ENCODE measurements at regions of chr10 and their contacts with region 1.

Region 1: DNA sequence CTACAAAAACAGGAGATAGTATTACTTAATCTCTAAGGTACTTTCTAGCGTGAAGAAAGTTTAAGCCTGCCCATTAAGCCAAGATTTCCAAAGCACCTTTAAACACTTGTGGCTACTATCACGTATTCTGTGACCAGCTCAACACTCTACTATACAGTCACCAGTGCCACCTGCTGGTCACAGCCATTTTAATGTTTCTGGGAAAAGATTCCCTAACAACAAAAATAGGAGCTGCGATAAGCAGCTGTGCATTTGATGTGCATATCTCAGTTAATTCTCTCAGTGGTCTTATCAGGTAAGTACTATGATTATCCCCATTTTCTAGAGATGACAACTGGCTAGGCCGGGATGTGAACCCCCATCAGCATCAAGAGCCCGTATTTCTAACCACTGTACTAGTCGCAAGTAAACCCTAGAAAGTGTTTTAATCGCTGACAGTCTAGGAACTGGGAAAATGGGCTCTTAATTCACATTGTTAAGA is 860 bp downstream of the SEC31B start:
- DNase-seq: peak; percentile 82
- ATAC-seq: peak; percentile 76
- H3K4me3 Mint-ChIP-seq: no peak overlapping the region
- H3K27ac Mint-ChIP-seq: peak overlapping the region; percentile 47
- H3K4me1 Mint-ChIP-seq: peaks cover 13% of the 10 kb centered on the region
- H3K27me3 Mint-ChIP-seq: no peaks in the 10 kb centered on the region

Region 2: DNA sequence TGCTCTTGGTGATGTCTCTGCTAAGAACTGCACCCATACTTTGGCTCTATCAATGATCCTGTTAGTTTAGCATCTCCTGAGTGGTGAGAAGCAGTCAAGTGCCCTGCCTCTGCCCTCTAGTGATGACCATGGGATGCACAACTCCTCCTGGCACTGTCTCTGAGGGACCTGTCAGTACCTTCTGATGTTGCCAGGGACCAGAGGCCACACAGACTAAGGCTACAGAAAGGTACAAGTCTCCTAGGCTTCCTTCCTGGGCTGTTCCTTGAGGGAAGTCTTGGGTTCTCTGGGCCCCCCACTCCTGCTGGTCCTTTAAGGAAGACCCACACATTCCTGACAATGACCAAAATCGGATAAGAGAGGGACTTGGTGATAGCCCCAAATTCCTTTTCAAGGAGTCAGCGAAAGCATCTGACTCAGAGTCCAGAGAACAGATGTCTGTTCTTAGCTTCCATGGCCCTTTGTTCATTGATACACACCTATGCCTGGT is 970.7 kb before region 1 on chr10:
- CTCF ChIA-PET with region 1: no interaction called
- POLR2A ChIA-PET with region 1: no interaction called
- intact Hi-C with region 1: no loop called
- DNase-seq: peak; percentile 48
- ATAC-seq: peak; percentile 65
- H3K4me3 Mint-ChIP-seq: no peak overlapping the region
- H3K27ac Mint-ChIP-seq: no peak overlapping the region
- H3K4me1 Mint-ChIP-seq: no peaks in the 10 kb centered on the region
- H3K27me3 Mint-ChIP-seq: peaks cover 36% of the 10 kb centered on the region

Region 3: DNA sequence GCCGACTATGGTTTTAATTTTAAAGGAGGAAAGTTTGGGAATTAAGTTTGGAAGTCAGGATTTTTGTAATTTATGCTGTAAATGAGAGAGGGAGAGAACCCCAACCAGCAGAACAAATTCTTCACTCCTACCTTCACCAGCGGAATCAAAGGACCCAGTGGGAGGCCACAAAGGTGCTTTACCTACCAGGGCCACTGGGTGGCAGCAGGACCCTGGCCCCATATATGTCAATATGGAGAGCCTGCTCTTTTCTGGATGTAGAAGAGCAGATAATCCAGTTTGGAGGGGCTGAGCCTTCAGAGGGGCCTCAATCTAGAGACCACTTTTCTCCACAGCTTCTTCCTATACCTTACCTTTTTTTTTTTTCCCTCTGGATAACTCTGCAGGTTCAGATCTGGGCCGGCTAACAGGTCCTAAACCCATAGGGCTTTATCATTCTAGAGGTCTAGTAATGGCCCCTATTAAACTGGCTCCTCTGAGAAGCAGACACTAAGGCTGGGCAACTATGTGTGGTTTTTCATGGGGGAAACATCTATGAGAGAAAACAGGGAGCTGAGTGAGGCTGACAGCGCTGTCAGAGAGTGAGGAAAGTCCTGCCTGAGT is 180.3 kb before region 1 on chr10:
- CTCF ChIA-PET with region 1: interaction called, 12 read pairs
- POLR2A ChIA-PET with region 1: no interaction called
- intact Hi-C with region 1: loop called in 1 of 2 experiments (anchors 1 kb)
- DNase-seq: peak; percentile 90
- ATAC-seq: peak; percentile 85
- H3K4me3 Mint-ChIP-seq: no peak overlapping the region
- H3K27ac Mint-ChIP-seq: no peak overlapping the region
- H3K4me1 Mint-ChIP-seq: no peaks in the 10 kb centered on the region
- H3K27me3 Mint-ChIP-seq: no peaks in the 10 kb centered on the region

Region 4: GRCh38 chr10:100346765-100347567 is 171.8 kb before region 1 on chr10 and contains the start of gene SCD:
- CTCF ChIA-PET with region 1: interaction called, 13 read pairs
- POLR2A ChIA-PET with region 1: no interaction called
- intact Hi-C with region 1: no loop called
- DNase-seq: peak; percentile 94
- ATAC-seq: peak; percentile 92
- H3K4me3 Mint-ChIP-seq: peak within 1 kb of the TSS; percentile 88
- H3K27ac Mint-ChIP-seq: peak within 1 kb of the TSS; percentile 91
- H3K4me1 Mint-ChIP-seq: peaks cover 44% of the 10 kb centered on the region
- H3K27me3 Mint-ChIP-seq: no peaks in the 10 kb centered on the region
- total RNA-seq, gene SCD: 203 to 206 TPM

Region 5: GRCh38 chr10:100433253-100434240 is 85.3 kb before region 1 on chr10:
- CTCF ChIA-PET with region 1: interaction called, 117 read pairs
- POLR2A ChIA-PET with region 1: no interaction called
- intact Hi-C with region 1: loop called (anchors 1 kb)
- DNase-seq: peak; percentile 98
- ATAC-seq: peak; percentile 98
- H3K4me3 Mint-ChIP-seq: peak overlapping the region; percentile 7
- H3K27ac Mint-ChIP-seq: no peak overlapping the region
- H3K4me1 Mint-ChIP-seq: peaks cover 5% of the 10 kb centered on the region
- H3K27me3 Mint-ChIP-seq: peaks cover 2% of the 10 kb centered on the region

Region 6: GRCh38 chr10:100438674-100439315 is 80.0 kb before region 1 on chr10:
- CTCF ChIA-PET with region 1: interaction called, 117 read pairs
- POLR2A ChIA-PET with region 1: no interaction called
- intact Hi-C with region 1: loop called (anchors 1 kb)
- DNase-seq: no peak
- ATAC-seq: no peak
- H3K4me3 Mint-ChIP-seq: no peak overlapping the region
- H3K27ac Mint-ChIP-seq: no peak overlapping the region
- H3K4me1 Mint-ChIP-seq: peaks cover 3% of the 10 kb centered on the region
- H3K27me3 Mint-ChIP-seq: peaks cover 1% of the 10 kb centered on the region

Region 7: DNA sequence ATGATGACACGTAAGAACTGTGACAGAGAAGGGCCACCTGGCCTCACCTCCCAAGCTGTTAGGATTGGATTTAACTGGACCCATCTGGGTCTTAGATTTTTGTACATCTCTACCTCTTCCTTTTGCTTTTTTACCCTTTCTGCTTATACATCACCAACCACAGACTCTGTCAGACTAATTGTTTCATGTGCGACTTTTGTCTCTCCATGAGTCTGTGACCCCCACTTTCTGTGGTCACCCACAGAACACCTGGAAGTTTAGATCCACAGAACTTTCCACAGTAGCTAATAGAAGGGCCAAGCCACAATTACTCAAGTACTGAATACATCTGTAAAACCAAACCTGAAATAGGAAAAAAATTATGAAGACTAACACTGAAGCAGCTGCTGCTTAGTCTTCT is 22.2 kb before region 1 on chr10:
- CTCF ChIA-PET with region 1: interaction called, 15 read pairs
- POLR2A ChIA-PET with region 1: no interaction called
- intact Hi-C with region 1: no loop called
- DNase-seq: peak; percentile 20
- ATAC-seq: peak; percentile 53
- H3K4me3 Mint-ChIP-seq: no peak overlapping the region
- H3K27ac Mint-ChIP-seq: peak overlapping the region; percentile 62
- H3K4me1 Mint-ChIP-seq: peaks cover 5% of the 10 kb centered on the region
- H3K27me3 Mint-ChIP-seq: no peaks in the 10 kb centered on the region

Region 8: GRCh38 chr10:100529475-100530298 is 10.9 kb after region 1 on chr10 and contains the start of gene NDUFB8:
- CTCF ChIA-PET with region 1: interaction called, 27 read pairs
- POLR2A ChIA-PET with region 1: no interaction called
- intact Hi-C with region 1: no loop called
- DNase-seq: peak; percentile 93
- ATAC-seq: peak; percentile 72
- H3K4me3 Mint-ChIP-seq: peak within 1 kb of the TSS; percentile 88
- H3K27ac Mint-ChIP-seq: peak within 1 kb of the TSS; percentile 99
- H3K4me1 Mint-ChIP-seq: peaks cover 37% of the 10 kb centered on the region
- H3K27me3 Mint-ChIP-seq: no peaks in the 10 kb centered on the region
- total RNA-seq, gene NDUFB8: 291 to 375 TPM